ENCODE measurements at regions of chr3 and their contacts with region 1.

Region 1: DNA sequence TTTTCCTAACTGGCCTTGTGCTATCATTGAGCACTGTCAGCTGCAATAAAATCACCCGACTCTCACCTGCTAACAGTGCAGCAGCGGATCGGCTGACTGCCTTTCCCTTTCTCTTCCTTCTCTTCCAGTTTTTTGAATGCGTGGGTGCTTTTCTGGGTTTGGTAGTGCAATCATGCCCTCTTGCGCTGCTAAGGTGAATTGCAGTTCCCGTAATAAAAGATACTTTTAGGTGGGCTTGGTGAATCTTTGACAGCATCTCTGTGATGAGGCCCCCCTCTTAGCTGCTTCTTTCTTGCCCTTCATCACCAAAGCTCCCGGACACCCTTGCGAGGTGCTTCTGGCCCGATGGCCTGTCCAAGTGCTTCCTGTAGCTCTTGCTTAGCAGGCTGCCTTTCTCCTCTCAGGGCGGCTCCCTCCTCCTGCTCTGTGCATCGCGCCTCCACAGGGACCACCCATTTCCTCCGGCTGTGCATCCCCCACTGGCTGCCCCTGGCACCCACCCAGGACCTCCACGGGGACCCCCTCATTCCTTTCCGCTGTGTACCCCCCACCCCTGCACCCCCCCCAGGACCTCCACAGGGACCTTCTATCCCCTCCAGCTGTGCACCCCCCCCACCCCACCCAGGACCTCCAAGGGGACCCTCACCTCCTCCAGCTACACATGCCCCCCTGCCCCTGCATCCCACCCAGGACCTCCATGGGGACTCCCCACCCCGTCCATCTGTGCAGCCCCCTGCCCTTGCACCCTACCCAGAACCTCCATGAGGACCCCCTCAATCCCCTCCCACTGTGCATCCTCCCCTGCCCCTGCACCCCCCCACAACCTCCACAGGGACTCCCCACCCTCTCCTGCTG is 50.8 kb upstream of the RPL32 start:
- DNase-seq: peak; percentile 80
- H3K4me3 ChIP-seq: peak overlapping the region; percentile 21 to 31; a peak in 2 of 4 replicates
- H3K27ac ChIP-seq: no peak overlapping the region
- H3K4me1 ChIP-seq: peaks cover 0 to 7% of the 10 kb centered on the region in 2 experiments; a peak in 1 of 4 replicates
- H3K27me3 ChIP-seq: peaks cover 5% of the 10 kb centered on the region; the same call in 1 of the 2 replicates
- CTCF ChIP-seq: peak; percentile 91
- EP300 ChIP-seq: no peak
- RAD21 ChIP-seq: peak; percentile 97

Region 2: GRCh38 chr3:12810013-12810780 is 82.0 kb before region 1 on chr3:
- CTCF ChIA-PET with region 1: interaction called, 10 read pairs
- POLR2A ChIA-PET with region 1: interaction called, 3 read pairs
- DNase-seq: peak; percentile 100
- H3K4me3 ChIP-seq: peak overlapping the region; percentile 57 to 71
- H3K27ac ChIP-seq: peak overlapping the region; percentile 4 to 84; a peak in 3 of 4 replicates
- H3K4me1 ChIP-seq: peaks cover 6 to 15% of the 10 kb centered on the region in 2 experiments; a peak in 2 of 4 replicates
- H3K27me3 ChIP-seq: no peaks in the 10 kb centered on the region
- CTCF ChIP-seq: peak; percentile 73
- EP300 ChIP-seq: no peak
- RAD21 ChIP-seq: peak; percentile 46

Region 3: DNA sequence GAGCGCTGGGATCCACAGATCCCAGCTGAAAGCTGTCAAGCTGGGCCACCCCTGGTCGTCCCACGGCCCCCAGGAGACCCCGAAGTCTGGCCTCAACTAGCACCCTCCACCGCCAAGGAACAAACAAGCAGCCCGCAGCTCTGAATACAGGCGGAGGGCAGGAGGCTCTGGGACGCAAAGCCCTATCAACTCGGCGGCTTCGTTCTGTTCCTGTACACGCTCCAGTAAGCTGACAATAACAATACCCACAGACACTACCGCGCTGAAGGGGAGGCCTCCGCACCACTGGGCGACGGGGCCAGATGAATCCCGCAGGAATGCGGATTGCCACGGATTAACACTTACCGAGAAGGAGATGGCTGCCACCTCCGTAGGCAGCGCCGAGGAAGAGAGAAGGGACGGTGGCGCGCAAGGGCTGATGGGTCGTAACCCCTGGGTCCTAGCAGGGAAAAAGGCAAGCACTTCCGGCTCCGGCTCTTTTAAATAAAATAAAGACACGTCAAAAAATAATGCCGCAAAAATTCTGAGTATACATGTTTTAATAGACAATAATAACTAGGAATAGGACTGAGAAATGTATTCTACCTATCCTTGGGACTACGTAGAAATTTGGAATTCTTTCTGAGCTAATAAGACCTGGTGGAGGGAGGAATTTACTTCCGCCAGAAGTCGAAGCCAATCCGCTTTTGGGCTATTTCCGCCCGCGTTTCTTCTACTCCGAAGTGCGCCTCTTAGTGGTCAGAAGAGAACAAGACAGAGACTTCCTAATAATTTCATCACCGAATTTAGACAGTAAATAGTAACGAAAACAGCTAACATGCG is 50.9 kb before region 1 on chr3 and contains the start of gene RPL32:
- CTCF ChIA-PET with region 1: interaction called, 28 read pairs
- POLR2A ChIA-PET with region 1: interaction called, 3 read pairs
- DNase-seq: peak; percentile 83
- H3K4me3 ChIP-seq: peak within 1 kb of the TSS; percentile 78 to 97
- H3K27ac ChIP-seq: peak within 1 kb of the TSS; percentile 83 to 96
- H3K4me1 ChIP-seq: peaks cover 22 to 29% of the 10 kb centered on the region in 2 experiments; a peak in 3 of 4 replicates
- H3K27me3 ChIP-seq: no peaks in the 10 kb centered on the region
- CTCF ChIP-seq: peak; percentile 84
- EP300 ChIP-seq: no peak
- RAD21 ChIP-seq: peak; percentile 44
- polyA plus RNA-seq, gene RPL32: 2,077 and 2,311 TPM in 2 replicates

Region 4: DNA sequence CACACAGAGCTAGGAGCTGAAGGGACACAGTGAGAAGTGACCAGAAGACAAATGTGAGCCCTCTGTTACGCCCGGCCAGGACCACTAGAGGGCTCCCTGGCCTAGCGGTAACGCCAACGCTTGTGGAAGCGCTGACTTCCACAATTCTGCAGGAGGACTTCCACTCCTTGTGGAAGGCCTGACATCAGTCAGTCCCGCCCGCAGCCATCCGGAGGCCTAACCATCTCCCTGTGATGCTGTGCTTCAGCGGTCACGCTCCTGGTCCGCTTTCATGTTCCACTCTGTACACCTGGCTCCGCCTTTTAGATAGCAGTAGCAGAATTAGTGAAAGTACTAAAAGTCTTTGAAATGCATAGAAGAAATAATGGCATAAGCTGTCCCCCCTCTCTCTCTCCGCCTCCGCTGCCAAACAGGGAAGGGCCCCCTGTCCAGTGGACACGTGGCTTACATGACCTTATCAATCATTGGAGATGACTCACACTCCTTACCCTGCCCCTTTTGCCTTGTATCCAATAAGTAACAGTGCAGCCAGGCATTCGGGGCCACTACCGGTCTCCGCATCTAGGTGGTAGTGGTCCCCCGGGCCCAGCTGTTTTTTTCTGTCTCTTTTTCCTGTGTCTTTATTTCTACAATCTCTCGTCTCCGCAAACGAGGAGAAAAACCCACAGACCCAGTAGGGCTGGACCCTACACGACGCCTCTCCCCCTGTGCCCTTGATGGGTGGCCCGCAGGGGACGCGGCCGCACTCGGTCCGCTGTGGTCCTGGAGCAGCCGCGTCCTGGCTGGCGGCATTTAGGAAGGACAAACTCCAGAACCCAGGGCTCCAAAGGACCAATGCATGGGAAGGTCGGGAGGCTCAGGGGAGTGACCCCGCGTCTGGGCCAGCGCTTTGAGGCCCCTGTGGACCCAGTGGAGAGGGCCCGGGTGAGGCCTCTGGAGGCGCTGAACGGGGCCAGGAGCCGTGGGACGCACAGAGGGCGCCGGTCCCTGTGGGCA is 23.9 kb before region 1 on chr3:
- CTCF ChIA-PET with region 1: interaction called, 150 read pairs
- POLR2A ChIA-PET with region 1: no interaction called
- DNase-seq: peak; percentile 89
- H3K4me3 ChIP-seq: peak overlapping the region in 1 of 2 experiments; percentile 10; a peak in 1 of 4 replicates
- H3K27ac ChIP-seq: no peak overlapping the region
- H3K4me1 ChIP-seq: peaks cover 0 to 12% of the 10 kb centered on the region in 2 experiments; a peak in 1 of 4 replicates
- H3K27me3 ChIP-seq: no peaks in the 10 kb centered on the region
- CTCF ChIP-seq: peak; percentile 84
- EP300 ChIP-seq: no peak
- RAD21 ChIP-seq: peak; percentile 94

Region 5: DNA sequence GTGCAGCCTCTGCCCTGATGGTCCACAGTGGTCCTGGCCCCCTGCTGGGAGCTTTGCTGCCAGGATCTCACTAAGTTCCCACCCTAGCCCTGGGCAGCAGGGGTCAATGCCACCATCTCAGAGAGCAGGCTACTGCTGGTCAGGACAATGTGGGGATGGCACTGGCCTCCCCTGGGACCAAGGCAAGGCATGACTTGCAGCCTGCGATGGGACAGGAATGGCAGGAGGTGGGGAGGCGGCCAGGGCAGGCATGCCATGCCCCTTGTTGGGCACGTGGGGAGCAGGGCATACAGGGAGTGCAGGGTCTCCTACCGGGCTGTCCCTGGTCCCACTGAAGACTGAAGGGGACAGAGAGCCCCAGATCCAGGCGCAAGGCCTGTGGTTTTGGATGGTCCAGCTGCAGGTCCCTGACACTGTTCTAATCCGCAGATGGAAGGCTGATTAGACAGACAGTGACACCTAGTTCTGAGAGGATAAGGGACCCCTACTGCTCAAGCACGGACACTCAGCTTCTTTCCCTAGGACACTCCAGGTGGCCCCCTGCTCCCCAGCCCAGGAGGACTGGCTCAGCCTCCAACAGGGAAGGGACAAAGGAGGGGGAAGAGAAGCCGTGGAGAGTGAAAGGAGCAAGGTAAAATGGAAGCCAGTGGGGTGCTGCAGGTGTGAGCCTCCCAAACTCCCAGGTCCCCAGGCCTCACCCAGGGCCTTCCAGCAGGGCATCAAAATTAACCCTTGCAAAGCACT is 18.3 kb after region 1 on chr3:
- CTCF ChIA-PET with region 1: interaction called, 43 read pairs
- POLR2A ChIA-PET with region 1: no interaction called
- DNase-seq: no peak
- H3K4me3 ChIP-seq: no peak overlapping the region
- H3K27ac ChIP-seq: no peak overlapping the region
- H3K4me1 ChIP-seq: no peaks in the 10 kb centered on the region; a peak in 1 of 4 replicates
- H3K27me3 ChIP-seq: no peaks in the 10 kb centered on the region
- CTCF ChIP-seq: no peak
- EP300 ChIP-seq: no peak
- RAD21 ChIP-seq: no peak

Region 6: GRCh38 chr3:12954891-12955650 is 62.9 kb after region 1 on chr3:
- CTCF ChIA-PET with region 1: interaction called, 15 read pairs
- POLR2A ChIA-PET with region 1: no interaction called
- DNase-seq: peak; percentile 88
- H3K4me3 ChIP-seq: no peak overlapping the region; a peak in 1 of 4 replicates
- H3K27ac ChIP-seq: peak overlapping the region; percentile 24 to 77; a peak in 3 of 4 replicates
- H3K4me1 ChIP-seq: peaks cover 15 to 52% of the 10 kb centered on the region in 2 experiments; a peak in 2 of 4 replicates
- H3K27me3 ChIP-seq: no peaks in the 10 kb centered on the region
- CTCF ChIP-seq: no peak
- EP300 ChIP-seq: peak in 1 of 2 experiments; percentile 50; a peak in 1 of 4 replicates
- RAD21 ChIP-seq: peak; percentile 59

Region 7: DNA sequence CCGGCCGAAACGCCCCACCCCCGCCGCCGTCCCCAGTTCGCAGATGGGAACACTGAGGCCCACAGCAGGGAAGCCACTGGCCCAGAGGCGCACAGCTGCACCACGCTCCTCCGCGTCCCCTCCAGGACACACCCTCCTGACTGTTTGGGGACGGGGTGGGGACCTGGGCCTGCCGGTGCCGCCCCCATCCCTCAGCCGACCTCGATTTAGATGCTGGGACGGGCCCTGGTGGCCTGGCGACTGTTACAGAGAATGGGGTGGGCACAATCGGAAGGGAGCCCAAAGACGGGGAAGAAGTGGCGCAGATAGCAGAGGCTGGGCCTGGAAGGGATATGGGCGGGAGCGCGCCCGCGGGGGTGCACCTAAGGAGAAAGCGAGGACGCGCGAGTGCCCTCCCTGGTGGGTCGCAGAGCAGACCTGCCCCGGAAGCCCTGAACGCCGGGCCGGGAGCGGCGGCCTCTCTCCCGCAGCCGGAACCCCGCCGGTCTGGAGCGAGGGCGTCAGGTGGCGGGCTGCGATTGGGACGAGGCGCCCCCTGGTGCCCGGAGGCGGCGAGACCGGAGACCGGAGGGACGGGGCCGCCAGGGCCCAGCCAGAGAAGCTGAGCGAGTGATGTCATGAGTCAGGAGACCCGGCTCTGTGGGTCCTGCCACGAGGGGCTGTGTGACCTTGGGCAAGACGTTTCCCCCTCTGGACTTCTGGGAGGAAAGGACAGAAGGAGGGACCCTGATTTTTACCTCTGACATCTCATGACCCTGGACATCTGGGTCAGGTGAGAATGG is 102.6 kb after region 1 on chr3:
- CTCF ChIA-PET with region 1: interaction called, 11 read pairs
- POLR2A ChIA-PET with region 1: no interaction called
- DNase-seq: peak; percentile 97
- H3K4me3 ChIP-seq: peak overlapping the region; percentile 67 to 85
- H3K27ac ChIP-seq: peak overlapping the region; percentile 44 to 78; a peak in 2 of 4 replicates
- H3K4me1 ChIP-seq: peaks cover 4 to 21% of the 10 kb centered on the region in 2 experiments; a peak in 1 of 4 replicates
- H3K27me3 ChIP-seq: no peaks in the 10 kb centered on the region
- CTCF ChIP-seq: peak; percentile 83
- EP300 ChIP-seq: 0 out of 4 replicates have a peak, but pooled peaks of 1 of the 2 experiments have one; percentile 15
- RAD21 ChIP-seq: peak; percentile 69

Region 8: DNA sequence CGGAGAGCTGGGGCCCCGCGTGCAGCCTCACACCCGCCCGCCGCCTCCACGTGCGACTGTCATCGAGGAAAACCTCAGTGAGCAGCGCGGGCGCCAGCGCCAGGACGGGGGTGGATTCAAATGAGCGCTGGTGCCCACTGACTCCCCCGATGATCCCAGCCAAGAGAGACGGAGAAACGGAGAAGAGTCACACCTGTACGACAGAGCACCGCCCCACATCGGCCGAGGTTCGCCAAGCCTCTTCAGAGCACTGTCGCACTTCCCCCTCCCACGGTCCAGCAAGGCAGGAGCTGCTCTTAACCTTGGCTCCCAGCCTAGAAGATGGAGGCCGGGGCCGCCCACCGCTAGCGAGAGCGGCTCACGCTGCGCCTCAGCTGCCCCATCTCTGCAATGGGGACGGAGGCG is 312.0 kb after region 1 on chr3:
- CTCF ChIA-PET with region 1: no interaction called
- POLR2A ChIA-PET with region 1: no interaction called
- DNase-seq: no peak
- H3K4me3 ChIP-seq: no peak overlapping the region
- H3K27ac ChIP-seq: no peak overlapping the region
- H3K4me1 ChIP-seq: peaks cover 0 to 3% of the 10 kb centered on the region in 2 experiments; a peak in 1 of 4 replicates
- H3K27me3 ChIP-seq: no peaks in the 10 kb centered on the region; the same call in 1 of the 2 replicates
- CTCF ChIP-seq: no peak
- EP300 ChIP-seq: no peak
- RAD21 ChIP-seq: no peak